CD8-positive, alpha-beta memory T cell (primary cell): ENCODE measurements at regions of chr11 and their contacts with region 1.

Region 1: GRCh38 chr11:119356349-119357031 is 10.0 kb upstream of the MFRP start:
- DNase-seq: peak; percentile 61 to 81 (median 67)
- H3K4me3 ChIP-seq: peak overlapping the region; percentile 80
- H3K4me3 Mint-ChIP-seq: peak overlapping the region; percentile 82 to 95 (median 88)
- H3K27ac ChIP-seq: peak overlapping the region; percentile 62
- H3K27ac Mint-ChIP-seq: peak overlapping the region in 7 of 8 donors; percentile 43 to 95 (median 74)
- H3K4me1 ChIP-seq: no peaks in the 10 kb centered on the region
- H3K4me1 Mint-ChIP-seq: peaks cover 6 to 9% (median 8%) of the 10 kb centered on the region in 3 donors
- H3K27me3 ChIP-seq: no peaks in the 10 kb centered on the region
- H3K27me3 Mint-ChIP-seq: peaks cover 15 to 40% of the 10 kb centered on the region in 2 donors

Region 2: GRCh38 chr11:119334174-119334930 is 22.1 kb before region 1 on chr11 and contains the start of gene RNF26:
- CTCF ChIA-PET with region 1: interaction called, 13 read pairs
- POLR2A ChIA-PET with region 1: interaction called, 3 read pairs
- DNase-seq: peak; percentile 88 to 95 (median 93)
- H3K4me3 ChIP-seq: peak within 1 kb of the TSS; percentile 88
- H3K4me3 Mint-ChIP-seq: peak within 1 kb of the TSS; percentile 90 to 100 (median 98)
- H3K27ac ChIP-seq: peak within 1 kb of the TSS; percentile 79
- H3K27ac Mint-ChIP-seq: peak within 1 kb of the TSS; percentile 90 to 99 (median 98)
- H3K4me1 ChIP-seq: peaks cover 14% of the 10 kb centered on the region
- H3K4me1 Mint-ChIP-seq: peaks cover 26 to 52% (median 45%) of the 10 kb centered on the region in 3 donors
- H3K27me3 ChIP-seq: peaks cover 10% of the 10 kb centered on the region
- H3K27me3 Mint-ChIP-seq: peaks cover 12 to 17% of the 10 kb centered on the region in 2 donors
- total RNA-seq, gene RNF26: 33.2 to 34.8 TPM

Region 3: DNA sequence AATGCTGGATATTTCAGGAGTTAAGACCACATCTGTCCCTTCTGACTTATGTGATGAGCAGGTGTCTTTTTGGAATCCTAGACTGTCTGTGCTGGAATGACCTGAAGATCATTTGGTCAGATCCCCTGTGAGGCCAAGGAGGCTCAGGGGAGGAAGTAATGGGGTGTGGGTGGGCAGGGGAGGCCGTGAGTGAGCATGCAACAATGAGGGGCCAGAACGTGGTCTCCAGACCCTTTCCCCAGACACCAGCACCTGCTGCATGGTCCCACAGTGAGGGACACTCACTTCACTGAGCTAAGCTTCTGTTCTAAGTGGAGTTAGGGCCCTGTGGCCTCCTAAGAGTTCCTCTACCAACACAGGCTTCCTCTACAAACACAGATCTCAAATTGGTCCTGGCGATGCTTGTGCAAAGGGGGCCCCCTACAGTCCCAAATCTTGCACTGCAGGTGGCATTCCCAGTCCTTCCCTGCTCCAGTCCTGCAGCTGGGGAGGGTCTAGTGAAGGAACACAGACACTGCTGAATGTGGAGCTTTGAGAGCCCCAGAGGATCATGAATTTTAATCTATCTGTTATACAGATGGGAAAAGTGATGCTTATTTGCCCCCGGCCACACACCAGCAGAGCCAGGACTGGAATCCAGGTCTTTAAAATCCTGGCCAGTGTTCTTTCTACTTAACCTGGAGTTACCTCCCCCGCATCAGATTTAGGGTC is 17.6 kb after region 1 on chr11:
- CTCF ChIA-PET with region 1: interaction called, 145 read pairs
- POLR2A ChIA-PET with region 1: no interaction called
- DNase-seq: peak in 4 of 5 donors; percentile 33 to 59 (median 38)
- H3K4me3 ChIP-seq: no peak overlapping the region
- H3K4me3 Mint-ChIP-seq: peak overlapping the region in 2 of 7 donors; percentile 10 to 32
- H3K27ac ChIP-seq: no peak overlapping the region
- H3K27ac Mint-ChIP-seq: peak overlapping the region in 5 of 8 donors; percentile 17 to 63 (median 47)
- H3K4me1 ChIP-seq: peaks cover 9% of the 10 kb centered on the region
- H3K4me1 Mint-ChIP-seq: peaks cover 18 to 29% (median 19%) of the 10 kb centered on the region in 3 donors
- H3K27me3 ChIP-seq: no peaks in the 10 kb centered on the region
- H3K27me3 Mint-ChIP-seq: peaks cover 6 to 16% of the 10 kb centered on the region in 2 donors

Region 4: GRCh38 chr11:119381181-119381988 is 24.9 kb after region 1 on chr11 and contains the start of gene USP2:
- CTCF ChIA-PET with region 1: interaction called, 145 read pairs
- POLR2A ChIA-PET with region 1: interaction called, 5 read pairs
- DNase-seq: peak; percentile 97 to 99 (median 97)
- H3K4me3 ChIP-seq: peak within 1 kb of the TSS; percentile 74
- H3K4me3 Mint-ChIP-seq: peak within 1 kb of the TSS in 1 of 7 donors; percentile 10
- H3K27ac ChIP-seq: peak within 1 kb of the TSS; percentile 69
- H3K27ac Mint-ChIP-seq: peak within 1 kb of the TSS in 3 of 8 donors; percentile 26 to 36 (median 35)
- H3K4me1 ChIP-seq: peaks cover 13% of the 10 kb centered on the region
- H3K4me1 Mint-ChIP-seq: peaks cover 0 to 8% (median 4%) of the 10 kb centered on the region in 3 donors
- H3K27me3 ChIP-seq: no peaks in the 10 kb centered on the region
- H3K27me3 Mint-ChIP-seq: peaks cover 0 to 3% of the 10 kb centered on the region in 2 donors
- total RNA-seq, gene USP2: 0.15 to 0.51 TPM

Region 5: DNA sequence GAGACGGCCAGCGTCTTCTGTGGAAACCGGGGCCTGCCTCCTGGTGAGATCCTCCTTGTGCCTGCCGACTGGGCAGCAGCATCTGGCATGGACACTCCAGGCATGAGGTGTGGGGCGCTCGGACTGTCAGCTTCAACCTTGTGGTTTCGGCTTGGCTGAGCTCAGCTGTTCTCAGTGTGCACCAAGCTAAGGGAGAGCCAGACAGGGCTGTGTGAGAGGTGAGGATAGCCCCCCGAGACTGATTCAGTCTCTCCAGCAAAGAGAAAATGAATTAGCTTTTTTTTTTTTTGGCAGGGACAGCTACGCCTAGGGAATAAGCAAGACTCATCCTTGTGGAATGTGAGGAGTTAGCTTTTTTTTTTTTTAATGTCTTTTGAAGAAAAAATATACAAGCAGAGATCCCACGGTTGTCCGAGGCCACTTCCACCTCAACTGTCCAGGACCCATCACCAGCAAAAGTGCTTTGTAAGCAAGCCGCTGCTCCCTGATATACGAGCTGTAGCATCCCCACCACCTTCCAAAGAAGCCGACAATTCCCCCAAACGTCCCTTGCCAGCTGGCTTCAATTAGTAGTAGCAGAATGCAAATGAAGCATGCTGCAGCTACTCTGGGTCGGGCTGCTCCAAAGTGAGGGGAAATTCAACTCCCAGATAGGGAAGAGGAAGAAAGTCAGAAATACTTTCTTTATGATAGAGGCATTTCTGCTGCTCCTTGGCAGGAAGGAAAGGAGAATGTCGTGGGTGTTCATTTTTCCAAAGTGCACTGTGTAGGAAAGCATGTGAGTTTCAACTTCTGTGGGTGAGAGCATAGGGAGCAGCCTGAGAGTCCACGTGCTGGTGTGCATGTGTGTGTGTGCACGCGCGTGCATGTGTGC is 76.2 kb after region 1 on chr11:
- CTCF ChIA-PET with region 1: no interaction called
- POLR2A ChIA-PET with region 1: no interaction called
- DNase-seq: no peak
- H3K4me3 ChIP-seq: no peak overlapping the region
- H3K4me3 Mint-ChIP-seq: no peak overlapping the region
- H3K27ac ChIP-seq: no peak overlapping the region
- H3K27ac Mint-ChIP-seq: peak overlapping the region in 1 of 8 donors; percentile 77
- H3K4me1 ChIP-seq: no peaks in the 10 kb centered on the region
- H3K4me1 Mint-ChIP-seq: no peaks in the 10 kb centered on the region
- H3K27me3 ChIP-seq: no peaks in the 10 kb centered on the region
- H3K27me3 Mint-ChIP-seq: peaks cover 15 to 54% of the 10 kb centered on the region in 2 donors

Region 6: DNA sequence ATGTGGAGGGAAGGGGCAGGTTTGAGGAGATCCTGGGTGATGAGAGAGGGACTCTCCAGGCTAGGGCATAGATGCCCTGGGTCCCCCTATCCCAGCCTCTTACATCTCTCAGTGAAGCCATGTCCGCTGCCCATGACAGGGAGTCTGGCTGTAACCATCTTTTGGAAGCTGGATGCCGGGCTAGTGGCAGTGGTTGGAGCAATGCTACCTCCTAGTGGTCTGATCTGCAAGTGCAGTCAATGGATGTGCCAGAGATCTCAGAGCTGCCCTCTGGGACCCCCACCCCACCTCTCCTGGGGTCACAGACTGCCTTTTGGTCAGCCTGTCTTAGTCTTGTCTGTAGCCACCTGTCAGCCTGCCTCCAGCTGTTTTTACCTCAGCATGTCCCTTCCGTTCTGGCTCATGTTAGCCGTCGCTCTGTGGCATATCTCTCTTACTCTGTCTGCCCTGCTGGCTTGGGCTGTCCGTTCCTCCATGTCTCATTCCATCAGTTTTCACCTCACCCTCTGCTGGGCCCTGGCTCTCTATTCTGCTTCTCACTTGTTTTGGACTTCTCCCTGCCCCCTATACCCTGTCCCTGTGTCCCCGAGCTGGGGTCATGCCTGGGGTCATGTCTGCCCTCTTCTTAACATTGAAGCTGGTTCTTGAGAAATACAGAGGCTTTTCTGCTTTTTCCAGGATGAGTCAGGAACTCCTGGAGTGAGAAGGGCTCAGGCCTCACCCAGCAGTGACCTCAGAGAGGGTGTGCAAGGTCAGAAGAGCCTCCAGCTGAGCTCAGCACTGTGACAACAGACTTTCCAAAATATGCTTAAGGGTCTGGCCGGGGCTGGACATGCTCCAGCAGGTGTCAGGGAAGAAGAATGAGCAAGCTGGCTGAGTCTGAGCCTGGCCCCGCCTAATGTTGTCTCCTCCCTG is 118.4 kb after region 1 on chr11:
- CTCF ChIA-PET with region 1: interaction called, 42 read pairs
- POLR2A ChIA-PET with region 1: interaction called, 4 read pairs
- DNase-seq: peak; percentile 27 to 58 (median 35)
- H3K4me3 ChIP-seq: no peak overlapping the region
- H3K4me3 Mint-ChIP-seq: no peak overlapping the region
- H3K27ac ChIP-seq: no peak overlapping the region
- H3K27ac Mint-ChIP-seq: no peak overlapping the region
- H3K4me1 ChIP-seq: no peaks in the 10 kb centered on the region
- H3K4me1 Mint-ChIP-seq: no peaks in the 10 kb centered on the region
- H3K27me3 ChIP-seq: peaks cover 5% of the 10 kb centered on the region
- H3K27me3 Mint-ChIP-seq: peaks cover 11 to 55% of the 10 kb centered on the region in 2 donors

Region 7: GRCh38 chr11:119484741-119485605 is 128.5 kb after region 1 on chr11:
- CTCF ChIA-PET with region 1: no interaction called
- POLR2A ChIA-PET with region 1: no interaction called
- DNase-seq: peak in 1 of 5 donors; percentile 13
- H3K4me3 ChIP-seq: no peak overlapping the region
- H3K4me3 Mint-ChIP-seq: no peak overlapping the region
- H3K27ac ChIP-seq: no peak overlapping the region
- H3K27ac Mint-ChIP-seq: no peak overlapping the region
- H3K4me1 ChIP-seq: no peaks in the 10 kb centered on the region
- H3K4me1 Mint-ChIP-seq: peaks cover 0 to 2% (median 0%) of the 10 kb centered on the region in 3 donors
- H3K27me3 ChIP-seq: peaks cover 7% of the 10 kb centered on the region
- H3K27me3 Mint-ChIP-seq: peaks cover 21 to 66% of the 10 kb centered on the region in 2 donors